ENCODE measurements at regions of chr17 and their contacts with region 1.

Region 1: GRCh38 chr17:7045909-7046724 is 2.2 kb upstream of the SLC16A11 start:
- DNase-seq: peak in 27 of 35 experiments; percentile 13 to 88 (median 41)
- ATAC-seq: peak; percentile 41 to 49 (median 44)
- H3K4me3 ChIP-seq: peak overlapping the region; percentile 48 to 64
- H3K4me3 Mint-ChIP-seq: peak overlapping the region; percentile 78 to 83 (median 79)
- H3K27ac ChIP-seq: peak overlapping the region; percentile 70
- H3K27ac Mint-ChIP-seq: peak overlapping the region; percentile 86 to 92
- H3K4me1 ChIP-seq: peaks cover 21 to 46% of the 10 kb centered on the region in 2 experiments
- H3K4me1 Mint-ChIP-seq: peaks cover 32 to 44% (median 36%) of the 10 kb centered on the region in 3 donors
- H3K27me3 ChIP-seq: peaks cover 0 to 19% of the 10 kb centered on the region in 2 experiments
- H3K27me3 Mint-ChIP-seq: no peaks in the 10 kb centered on the region

Region 2: GRCh38 chr17:7035591-7036368 is 10.3 kb before region 1 on chr17 and contains the start of gene SLC16A13:
- CTCF ChIA-PET with region 1: interaction called in 1 of 2 experiments, 19 read pairs
- POLR2A ChIA-PET with region 1: interaction called, 3 to 4 read pairs
- DNase-seq: peak; percentile 95 to 99 (median 98)
- ATAC-seq: peak; percentile 89 to 94 (median 90)
- H3K4me3 ChIP-seq: peak within 1 kb of the TSS; percentile 64 to 98
- H3K4me3 Mint-ChIP-seq: peak within 1 kb of the TSS; percentile 87 to 92 (median 92)
- H3K27ac ChIP-seq: peak within 1 kb of the TSS; percentile 93
- H3K27ac Mint-ChIP-seq: peak within 1 kb of the TSS; percentile 93 to 97
- H3K4me1 ChIP-seq: peaks cover 38 to 73% of the 10 kb centered on the region in 2 experiments
- H3K4me1 Mint-ChIP-seq: peaks cover 54 to 66% (median 59%) of the 10 kb centered on the region in 3 donors
- H3K27me3 ChIP-seq: no peaks in the 10 kb centered on the region
- H3K27me3 Mint-ChIP-seq: no peaks in the 10 kb centered on the region
- total RNA-seq, gene SLC16A13: 3.8 to 17.6 (median 15.4) TPM

Region 3: DNA sequence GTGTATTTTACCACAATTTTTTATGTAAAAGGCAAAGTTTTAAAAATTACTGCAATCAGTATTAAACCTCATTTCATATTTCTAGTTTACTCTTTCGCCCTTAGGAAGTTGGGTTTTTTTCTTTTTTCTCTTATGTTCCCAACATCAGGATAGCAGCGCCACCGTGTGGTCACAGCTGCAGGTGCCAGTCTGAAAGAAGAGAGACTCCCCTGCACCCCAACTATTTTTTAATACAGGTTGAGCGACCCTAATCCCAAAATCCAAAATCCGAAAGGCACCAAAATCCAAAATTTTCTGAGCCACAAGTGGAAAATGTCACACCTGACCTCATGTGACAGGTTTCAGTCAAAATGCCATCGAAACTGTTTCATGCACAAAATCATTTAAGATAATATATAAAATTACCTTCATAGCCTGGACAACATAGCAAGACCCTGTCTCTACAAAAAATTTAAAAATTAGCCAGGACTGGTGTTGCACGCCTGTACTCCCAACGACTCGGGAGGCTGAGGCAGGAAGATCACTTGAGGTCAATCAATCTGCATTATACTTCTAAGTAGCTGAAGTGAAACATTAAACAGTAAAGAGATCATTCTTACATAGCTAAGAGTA is 90.3 kb after region 1 on chr17:
- CTCF ChIA-PET with region 1: interaction called, 7 to 48 read pairs
- POLR2A ChIA-PET with region 1: interaction called, 3 to 5 read pairs
- DNase-seq: peak; percentile 43 to 92 (median 74)
- ATAC-seq: peak in 2 of 4 experiments; percentile 39 to 46
- H3K4me3 ChIP-seq: no peak overlapping the region
- H3K4me3 Mint-ChIP-seq: no peak overlapping the region
- H3K27ac ChIP-seq: no peak overlapping the region
- H3K27ac Mint-ChIP-seq: peak overlapping the region in 1 of 2 donors; percentile 49
- H3K4me1 ChIP-seq: peaks cover 6 to 24% of the 10 kb centered on the region in 2 experiments
- H3K4me1 Mint-ChIP-seq: peaks cover 21 to 24% (median 21%) of the 10 kb centered on the region in 3 donors
- H3K27me3 ChIP-seq: peaks cover 0 to 49% of the 10 kb centered on the region in 2 experiments
- H3K27me3 Mint-ChIP-seq: peaks cover 0 to 10% of the 10 kb centered on the region in 2 donors

Region 4: GRCh38 chr17:7252176-7253043 is 206.3 kb after region 1 on chr17 and contains the start of gene ELP5:
- CTCF ChIA-PET with region 1: no interaction called
- POLR2A ChIA-PET with region 1: interaction called in 1 of 2 experiments, 12 read pairs
- DNase-seq: peak in 33 of 35 experiments; percentile 66 to 98 (median 81)
- ATAC-seq: peak; percentile 51 to 57 (median 53)
- H3K4me3 ChIP-seq: peak within 1 kb of the TSS; percentile 81 to 94
- H3K4me3 Mint-ChIP-seq: peak within 1 kb of the TSS; percentile 91 to 94 (median 91)
- H3K27ac ChIP-seq: peak within 1 kb of the TSS; percentile 99
- H3K27ac Mint-ChIP-seq: peak within 1 kb of the TSS; percentile 97 to 99
- H3K4me1 ChIP-seq: peaks cover 23 to 45% of the 10 kb centered on the region in 2 experiments
- H3K4me1 Mint-ChIP-seq: peaks cover 37 to 48% (median 47%) of the 10 kb centered on the region in 3 donors
- H3K27me3 ChIP-seq: no peaks in the 10 kb centered on the region
- H3K27me3 Mint-ChIP-seq: no peaks in the 10 kb centered on the region
- total RNA-seq, gene ELP5: 29.8 to 35.9 (median 33.3) TPM

Region 5: GRCh38 chr17:7306911-7307686 is 261.0 kb after region 1 on chr17 and contains the start of gene EIF5A:
- CTCF ChIA-PET with region 1: interaction called, 5 to 10 read pairs
- POLR2A ChIA-PET with region 1: interaction called in 1 of 2 experiments, 6 read pairs
- DNase-seq: peak; percentile 99 to 100 (median 100)
- ATAC-seq: peak; percentile 75 to 83 (median 80)
- H3K4me3 ChIP-seq: peak within 1 kb of the TSS; percentile 76 to 99
- H3K4me3 Mint-ChIP-seq: peak within 1 kb of the TSS; percentile 80 to 96 (median 93)
- H3K27ac ChIP-seq: peak within 1 kb of the TSS; percentile 98
- H3K27ac Mint-ChIP-seq: peak within 1 kb of the TSS; percentile 98 to 99
- H3K4me1 ChIP-seq: peaks cover 13 to 48% of the 10 kb centered on the region in 2 experiments
- H3K4me1 Mint-ChIP-seq: peaks cover 33 to 39% (median 37%) of the 10 kb centered on the region in 3 donors
- H3K27me3 ChIP-seq: peaks cover 0 to 2% of the 10 kb centered on the region in 2 experiments
- H3K27me3 Mint-ChIP-seq: no peaks in the 10 kb centered on the region
- total RNA-seq, gene EIF5A: 286 to 481 (median 306) TPM

Region 6: GRCh38 chr17:7685533-7686221 is 639.6 kb after region 1 on chr17:
- CTCF ChIA-PET with region 1: no interaction called
- POLR2A ChIA-PET with region 1: no interaction called
- DNase-seq: peak; percentile 70 to 95 (median 87)
- ATAC-seq: peak; percentile 64 to 69 (median 64)
- H3K4me3 ChIP-seq: peak overlapping the region; percentile 89 to 99
- H3K4me3 Mint-ChIP-seq: peak overlapping the region; percentile 85 to 99 (median 96)
- H3K27ac ChIP-seq: peak overlapping the region; percentile 98
- H3K27ac Mint-ChIP-seq: peak overlapping the region; percentile 100
- H3K4me1 ChIP-seq: peaks cover 17 to 35% of the 10 kb centered on the region in 2 experiments
- H3K4me1 Mint-ChIP-seq: peaks cover 43 to 52% (median 52%) of the 10 kb centered on the region in 3 donors
- H3K27me3 ChIP-seq: no peaks in the 10 kb centered on the region
- H3K27me3 Mint-ChIP-seq: no peaks in the 10 kb centered on the region

Measured in T-cell (primary cell).